ENCODE measurements at regions of chr2 and their contacts with region 1.

Region 1: GRCh38 chr2:74440378-74441169 is 1.2 kb downstream of the RTKN start:
- DNase-seq: peak; percentile 83
- ATAC-seq: peak; percentile 76
- H3K4me3 Mint-ChIP-seq: peak overlapping the region; percentile 99
- H3K27ac Mint-ChIP-seq: peak overlapping the region; percentile 100
- H3K4me1 Mint-ChIP-seq: peaks cover 41% of the 10 kb centered on the region
- H3K27me3 Mint-ChIP-seq: peaks cover 12% of the 10 kb centered on the region
- CTCF ChIP-seq: no peak

Region 2: DNA sequence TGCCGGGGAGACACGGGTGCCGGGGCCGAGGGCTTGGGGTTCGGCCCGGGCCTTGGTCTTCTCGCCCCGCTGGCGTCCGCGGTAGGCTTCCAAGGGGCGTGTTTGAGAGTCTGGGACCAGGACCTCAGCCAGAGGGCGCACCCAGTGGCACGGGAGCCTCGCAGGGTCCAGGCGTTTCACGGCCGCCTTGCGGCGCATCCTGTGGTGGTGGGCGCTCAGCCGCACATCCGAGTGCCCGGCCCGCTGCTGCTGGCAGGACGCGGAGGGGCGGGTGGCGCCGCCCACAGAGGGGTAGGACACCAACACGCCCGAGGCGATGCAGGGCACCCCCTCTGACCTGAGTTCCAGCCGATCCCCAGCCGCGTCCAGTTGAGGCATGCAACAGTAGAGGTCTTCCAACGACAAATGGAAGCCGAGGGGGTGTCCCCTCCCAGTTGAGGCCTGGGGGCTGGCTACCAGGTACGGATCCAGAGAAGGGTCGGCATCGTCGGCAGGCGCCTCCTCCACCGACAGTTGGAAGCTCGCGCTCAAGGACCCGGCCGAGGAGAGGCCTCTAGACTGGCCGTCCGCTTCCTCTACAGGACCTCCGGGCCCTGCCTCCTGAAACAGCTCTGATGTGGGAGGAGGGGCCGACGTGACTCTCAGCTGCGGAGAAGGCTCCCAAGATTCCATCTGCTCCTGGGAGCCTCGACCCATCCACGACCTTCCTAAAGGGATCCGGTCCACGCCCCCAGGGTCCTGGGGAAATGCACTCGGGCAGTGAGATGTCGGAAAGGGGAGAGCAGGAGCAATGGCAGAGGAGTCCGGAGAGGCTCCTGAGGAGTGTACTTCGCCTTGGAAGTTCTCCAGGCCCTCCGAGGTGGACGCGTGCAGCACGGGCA is 25.5 kb before region 1 on chr2:
- CTCF ChIA-PET with region 1: interaction called, 3 read pairs
- POLR2A ChIA-PET with region 1: interaction called, 10 read pairs
- DNase-seq: peak; percentile 62
- ATAC-seq: peak; percentile 64
- H3K4me3 Mint-ChIP-seq: peak overlapping the region; percentile 63
- H3K27ac Mint-ChIP-seq: no peak overlapping the region; the same call in 1 of the 2 replicates
- H3K4me1 Mint-ChIP-seq: peaks cover 13% of the 10 kb centered on the region
- H3K27me3 Mint-ChIP-seq: peaks cover 70% of the 10 kb centered on the region
- CTCF ChIP-seq: no peak

Region 3: DNA sequence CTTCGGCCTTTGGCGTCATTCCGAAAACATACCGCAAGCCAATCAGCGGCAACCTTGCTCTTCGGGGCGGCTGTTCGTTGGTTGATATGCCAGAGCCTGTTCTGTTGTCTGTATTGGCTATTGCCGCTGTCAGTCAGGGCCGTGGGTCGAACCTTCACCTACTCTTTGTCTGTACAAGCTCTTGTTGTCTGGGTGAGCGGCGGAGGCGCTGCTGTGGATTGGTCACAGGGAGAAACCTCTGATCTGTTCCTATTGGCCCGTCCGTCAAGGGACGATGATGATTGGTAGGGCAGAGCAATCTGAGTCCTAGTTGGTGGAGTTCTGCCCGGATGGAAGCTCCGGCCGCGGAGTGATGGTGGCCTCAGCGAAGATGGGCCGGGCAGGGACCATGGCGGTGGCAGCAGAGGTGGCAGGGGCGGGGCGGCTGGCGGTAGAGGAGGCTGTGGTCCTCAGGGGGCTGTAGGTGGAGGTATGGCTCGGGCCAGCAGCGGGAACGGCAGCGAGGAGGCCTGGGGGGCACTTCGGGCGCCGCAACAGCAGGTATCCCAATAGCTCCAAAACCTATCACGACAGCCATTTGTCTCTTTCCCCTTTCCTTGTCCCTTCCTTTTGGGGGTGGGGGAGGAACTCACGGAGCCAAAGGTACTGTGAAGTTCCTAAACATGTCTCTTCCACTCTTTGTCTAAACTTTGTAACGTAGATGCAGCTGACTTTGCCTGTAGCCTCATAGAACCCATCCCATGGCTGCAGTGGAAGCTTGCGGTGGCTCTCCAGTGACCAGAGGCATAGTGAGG is 17.8 kb after region 1 on chr2 and contains the start of gene WBP1:
- CTCF ChIA-PET with region 1: interaction called, 9 read pairs
- POLR2A ChIA-PET with region 1: interaction called, 29 read pairs
- DNase-seq: peak; percentile 100
- ATAC-seq: peak; percentile 89
- H3K4me3 Mint-ChIP-seq: peak within 1 kb of the TSS; percentile 96
- H3K27ac Mint-ChIP-seq: peak within 1 kb of the TSS; percentile 98
- H3K4me1 Mint-ChIP-seq: peaks cover 36% of the 10 kb centered on the region
- H3K27me3 Mint-ChIP-seq: no peaks in the 10 kb centered on the region
- CTCF ChIP-seq: no peak
- total RNA-seq, gene WBP1: 66.0 to 86.6 TPM (median 86.0 TPM) in 3 replicates

Region 4: GRCh38 chr2:74515981-74516633 is 75.5 kb after region 1 on chr2:
- CTCF ChIA-PET with region 1: no interaction called
- POLR2A ChIA-PET with region 1: no interaction called
- DNase-seq: peak; percentile 93
- ATAC-seq: peak; percentile 76
- H3K4me3 Mint-ChIP-seq: no peak overlapping the region
- H3K27ac Mint-ChIP-seq: no peak overlapping the region
- H3K4me1 Mint-ChIP-seq: peaks cover 16% of the 10 kb centered on the region
- H3K27me3 Mint-ChIP-seq: peaks cover 99% of the 10 kb centered on the region
- CTCF ChIP-seq: no peak

Measured in WTC11 (cell line).